Esophagus muscularis mucosa (tissue), 4 donors: ENCODE measurements at regions of chr2 and their contacts with region 1.

Region 1: GRCh38 chr2:46887028-46887885 is 28.3 kb downstream of the MCFD2 start:
- DNase-seq: no peak
- H3K4me3 ChIP-seq: no peak overlapping the region
- H3K27ac ChIP-seq: no peak overlapping the region
- H3K4me1 ChIP-seq: peaks cover 8 to 26% (median 19%) of the 10 kb centered on the region in 4 donors
- H3K27me3 ChIP-seq: no peaks in the 10 kb centered on the region
- CTCF ChIP-seq: no peak
- EP300 ChIP-seq: no peak
- POLR2A ChIP-seq: no peak

Region 2: GRCh38 chr2:46469116-46469515 is 418.1 kb before region 1 on chr2:
- intact Hi-C with region 1: loop called (anchors 5 kb)
- DNase-seq: no peak
- H3K4me3 ChIP-seq: no peak overlapping the region
- H3K27ac ChIP-seq: no peak overlapping the region
- H3K4me1 ChIP-seq: peaks cover 0 to 9% (median 5%) of the 10 kb centered on the region in 4 donors
- H3K27me3 ChIP-seq: no peaks in the 10 kb centered on the region
- CTCF ChIP-seq: no peak
- EP300 ChIP-seq: no peak
- POLR2A ChIP-seq: no peak

Region 3: DNA sequence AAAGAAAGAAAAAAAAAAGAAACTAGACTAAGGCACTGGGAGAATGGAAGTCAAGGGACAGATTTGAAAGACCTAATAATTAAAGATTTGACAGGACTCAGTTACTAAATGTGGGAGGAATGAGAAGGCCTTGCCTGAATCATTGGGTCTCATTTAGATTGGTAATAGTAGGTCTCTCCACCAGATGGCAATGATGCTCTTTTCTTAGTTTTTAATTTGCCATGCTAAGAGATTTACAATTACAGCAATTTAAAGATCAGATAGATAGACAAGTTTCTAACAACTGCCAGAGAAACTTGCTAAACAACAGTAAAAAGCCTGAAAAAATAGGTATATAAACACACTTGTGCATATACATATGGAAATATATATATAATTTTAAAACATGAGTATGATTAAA is 254.9 kb before region 1 on chr2:
- intact Hi-C with region 1: loop called (anchors 2 kb)
- DNase-seq: no peak
- H3K4me3 ChIP-seq: no peak overlapping the region
- H3K27ac ChIP-seq: no peak overlapping the region
- H3K4me1 ChIP-seq: no peaks in the 10 kb centered on the region
- H3K27me3 ChIP-seq: no peaks in the 10 kb centered on the region
- CTCF ChIP-seq: peak; percentile 64 to 68 (median 67)
- EP300 ChIP-seq: no peak
- POLR2A ChIP-seq: no peak

Region 4: DNA sequence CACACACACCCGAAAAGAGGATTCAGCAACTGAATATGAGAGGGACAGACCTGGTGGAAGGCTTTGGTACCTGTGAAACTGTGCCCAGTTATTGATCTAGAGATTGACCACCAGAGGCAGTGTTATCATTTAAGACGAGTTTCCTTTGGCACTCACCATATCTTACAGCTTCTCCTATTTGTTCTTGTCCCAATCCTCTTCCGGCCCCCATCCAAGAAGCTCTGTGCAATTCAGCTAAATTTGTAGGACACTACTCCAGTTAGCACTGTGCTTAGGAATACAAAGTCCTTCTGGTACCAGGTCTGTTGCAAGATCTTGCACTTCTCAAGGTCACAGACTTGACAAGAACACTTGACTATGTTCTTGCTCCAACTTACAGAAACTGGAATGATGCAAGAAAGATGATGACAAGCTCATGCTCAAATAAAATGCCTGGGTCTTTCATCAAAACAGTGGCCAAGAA is 230.2 kb before region 1 on chr2:
- intact Hi-C with region 1: loop called (anchors 5 kb)
- DNase-seq: peak; percentile 92
- H3K4me3 ChIP-seq: no peak overlapping the region
- H3K27ac ChIP-seq: peak overlapping the region; percentile 48 to 63 (median 54)
- H3K4me1 ChIP-seq: peaks cover 8 to 33% (median 28%) of the 10 kb centered on the region in 4 donors
- H3K27me3 ChIP-seq: no peaks in the 10 kb centered on the region
- CTCF ChIP-seq: peak in 2 of 3 experiments; percentile 34 to 41
- EP300 ChIP-seq: no peak
- POLR2A ChIP-seq: no peak

Region 5: DNA sequence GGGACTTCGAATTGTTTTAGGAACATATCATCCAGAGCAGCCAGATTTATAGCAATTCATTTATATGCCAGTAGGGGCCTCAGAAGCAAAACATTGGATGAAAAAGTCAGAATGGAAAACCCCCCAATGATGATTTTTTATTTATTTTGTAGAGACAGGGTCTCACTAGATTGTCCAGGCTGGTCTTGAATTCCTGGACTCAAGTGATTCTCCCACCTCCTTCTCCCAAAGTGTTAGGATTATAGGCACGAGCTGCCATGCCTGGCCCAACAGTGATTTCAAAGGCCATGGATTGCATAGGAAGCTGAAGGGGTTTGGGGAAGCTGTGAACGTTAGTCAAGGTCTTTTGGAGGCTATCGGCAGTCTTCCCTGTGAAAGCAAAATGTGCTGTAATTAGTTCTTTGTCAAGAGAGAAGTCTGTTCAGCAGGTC is 50.2 kb after region 1 on chr2:
- intact Hi-C with region 1: no loop called
- DNase-seq: no peak
- H3K4me3 ChIP-seq: no peak overlapping the region
- H3K27ac ChIP-seq: no peak overlapping the region
- H3K4me1 ChIP-seq: peaks cover 13 to 20% (median 19%) of the 10 kb centered on the region in 4 donors
- H3K27me3 ChIP-seq: no peaks in the 10 kb centered on the region
- CTCF ChIP-seq: peak in 1 of 3 experiments; percentile 49
- EP300 ChIP-seq: no peak
- POLR2A ChIP-seq: no peak